ENCODE measurements at regions of chr7 and their contacts with region 1.

Region 1: GRCh38 chr7:40866604-40867003 is 731.8 kb downstream of the SUGCT start:
- DNase-seq: peak in 1 of 2 experiments; percentile 3
- ATAC-seq: no peak
- H3K4me3 ChIP-seq: no peak overlapping the region
- H3K27ac ChIP-seq: no peak overlapping the region
- H3K4me1 ChIP-seq: no peaks in the 10 kb centered on the region
- CTCF ChIP-seq: no peak
- EP300 ChIP-seq: no peak
- POLR2A ChIP-seq: no peak
- RAD21 ChIP-seq: no peak

Region 2: DNA sequence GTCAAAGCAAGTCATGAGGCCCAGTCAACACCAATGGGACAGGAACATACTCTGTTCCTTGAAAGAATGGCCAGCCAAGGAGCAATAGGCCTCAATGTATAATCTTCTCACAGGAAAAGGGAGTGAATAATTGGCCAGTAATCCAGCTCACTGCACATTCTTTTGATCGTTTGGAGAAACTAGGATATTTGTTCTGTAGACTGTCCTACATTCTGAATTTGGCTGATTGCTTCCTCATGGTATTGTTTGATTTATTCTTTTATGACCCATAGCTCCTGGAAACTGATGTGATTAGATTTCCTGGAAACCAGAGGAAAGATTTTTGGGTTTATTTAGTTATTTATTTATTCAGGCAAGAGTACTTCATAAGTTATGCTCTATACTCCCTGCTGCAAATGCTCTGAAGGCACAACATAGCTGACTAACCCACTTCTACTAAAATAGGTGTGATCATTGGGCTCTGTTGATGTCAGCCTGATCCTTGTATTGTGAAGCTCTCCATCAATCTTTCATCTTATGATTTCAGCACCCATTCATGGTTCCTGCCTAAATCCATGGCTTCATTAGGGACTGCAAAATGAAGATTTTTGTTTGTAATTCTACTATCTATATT is 13.4 kb after region 1 on chr7:
- CTCF ChIA-PET with region 1: interaction called, 21 read pairs
- POLR2A ChIA-PET with region 1: no interaction called
- DNase-seq: no peak
- ATAC-seq: no peak
- H3K4me3 ChIP-seq: no peak overlapping the region
- H3K27ac ChIP-seq: no peak overlapping the region
- H3K4me1 ChIP-seq: no peaks in the 10 kb centered on the region
- CTCF ChIP-seq: no peak
- EP300 ChIP-seq: no peak
- POLR2A ChIP-seq: no peak
- RAD21 ChIP-seq: no peak

Measured in A549 (cell line).